H1 (cell line): ENCODE measurements at regions of chr15 and their contacts with region 1.

Region 1: DNA sequence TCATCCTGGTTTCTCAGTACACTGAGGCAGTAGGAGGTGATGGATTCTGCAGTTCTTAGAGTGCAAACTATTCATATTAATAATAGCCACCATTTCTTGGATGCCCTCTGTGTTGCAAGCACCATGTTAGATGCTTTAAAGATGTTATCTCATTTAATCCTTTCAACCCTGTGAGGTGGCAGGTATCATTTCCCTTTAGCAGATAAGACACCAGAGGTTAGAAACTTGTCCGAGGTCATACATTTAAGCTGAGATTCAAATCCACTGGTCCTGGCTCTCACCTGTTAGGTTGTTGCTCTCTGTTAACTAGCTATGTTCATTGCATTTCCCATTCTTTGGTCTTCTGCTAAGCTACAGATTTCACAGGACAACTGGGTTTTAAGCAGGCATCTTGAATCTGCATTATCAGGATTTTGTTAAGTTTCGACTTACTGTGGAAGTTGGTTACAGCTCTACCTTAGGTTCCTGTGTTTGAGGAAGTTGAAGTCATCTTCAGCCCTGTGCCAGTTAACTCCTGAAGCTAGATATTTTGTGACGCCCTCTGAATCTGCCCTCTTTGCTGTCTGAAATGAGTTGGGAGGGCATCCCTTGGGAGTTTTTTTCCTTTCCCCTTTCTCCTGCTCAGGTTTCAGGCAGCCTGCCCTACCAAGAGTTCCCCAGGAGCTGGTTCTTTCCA is 6.4 kb downstream of the PDE8A start:
- DNase-seq: peak in 1 of 2 experiments; percentile 38
- H3K4me3 ChIP-seq: no peak overlapping the region
- H3K27ac ChIP-seq: no peak overlapping the region
- H3K4me1 ChIP-seq: no peaks in the 10 kb centered on the region
- H3K27me3 ChIP-seq: peaks cover 2 to 9% (median 6%) of the 10 kb centered on the region in 4 experiments
- CTCF ChIP-seq: no peak
- EP300 ChIP-seq: no peak
- POLR2A ChIP-seq: no peak
- RAD21 ChIP-seq: no peak

Region 2: GRCh38 chr15:84634228-84634837 is 353.8 kb before region 1 on chr15:
- CTCF ChIA-PET with region 1: no interaction called
- POLR2A ChIA-PET with region 1: no interaction called
- DNase-seq: no peak
- H3K4me3 ChIP-seq: peak overlapping the region; percentile 43 to 71 (median 59)
- H3K27ac ChIP-seq: no peak overlapping the region
- H3K4me1 ChIP-seq: peaks cover 0 to 6% (median 4%) of the 10 kb centered on the region in 4 experiments; a peak in 6 of 7 replicates
- H3K27me3 ChIP-seq: peaks cover 0 to 21% (median 2%) of the 10 kb centered on the region in 4 experiments; a peak in 5 of 7 replicates
- CTCF ChIP-seq: no peak
- EP300 ChIP-seq: no peak
- POLR2A ChIP-seq: no peak
- RAD21 ChIP-seq: no peak

Region 3: GRCh38 chr15:84871428-84872305 is 116.4 kb before region 1 on chr15:
- CTCF ChIA-PET with region 1: no interaction called
- POLR2A ChIA-PET with region 1: no interaction called
- DNase-seq: no peak
- H3K4me3 ChIP-seq: no peak overlapping the region
- H3K27ac ChIP-seq: no peak overlapping the region
- H3K4me1 ChIP-seq: no peaks in the 10 kb centered on the region
- H3K27me3 ChIP-seq: no peaks in the 10 kb centered on the region
- CTCF ChIP-seq: peak; percentile 30 to 40 (median 40)
- EP300 ChIP-seq: no peak
- POLR2A ChIP-seq: no peak
- RAD21 ChIP-seq: peak; percentile 34 to 48

Region 4: GRCh38 chr15:84904419-84904818 is 83.7 kb before region 1 on chr15:
- CTCF ChIA-PET with region 1: no interaction called
- POLR2A ChIA-PET with region 1: no interaction called
- DNase-seq: no peak
- H3K4me3 ChIP-seq: no peak overlapping the region
- H3K27ac ChIP-seq: no peak overlapping the region
- H3K4me1 ChIP-seq: no peaks in the 10 kb centered on the region; a peak in 2 of 7 replicates
- H3K27me3 ChIP-seq: no peaks in the 10 kb centered on the region
- CTCF ChIP-seq: no peak
- EP300 ChIP-seq: no peak
- POLR2A ChIP-seq: no peak
- RAD21 ChIP-seq: no peak

Region 5: GRCh38 chr15:85003593-85004312 is 15.7 kb after region 1 on chr15:
- CTCF ChIA-PET with region 1: interaction called, 12 read pairs
- POLR2A ChIA-PET with region 1: interaction called, 3 read pairs
- DNase-seq: no peak
- H3K4me3 ChIP-seq: no peak overlapping the region
- H3K27ac ChIP-seq: no peak overlapping the region
- H3K4me1 ChIP-seq: peaks cover 0 to 7% (median 5%) of the 10 kb centered on the region in 4 experiments; a peak in 3 of 7 replicates
- H3K27me3 ChIP-seq: no peaks in the 10 kb centered on the region
- CTCF ChIP-seq: no peak
- EP300 ChIP-seq: no peak
- POLR2A ChIP-seq: no peak
- RAD21 ChIP-seq: no peak

Region 6: DNA sequence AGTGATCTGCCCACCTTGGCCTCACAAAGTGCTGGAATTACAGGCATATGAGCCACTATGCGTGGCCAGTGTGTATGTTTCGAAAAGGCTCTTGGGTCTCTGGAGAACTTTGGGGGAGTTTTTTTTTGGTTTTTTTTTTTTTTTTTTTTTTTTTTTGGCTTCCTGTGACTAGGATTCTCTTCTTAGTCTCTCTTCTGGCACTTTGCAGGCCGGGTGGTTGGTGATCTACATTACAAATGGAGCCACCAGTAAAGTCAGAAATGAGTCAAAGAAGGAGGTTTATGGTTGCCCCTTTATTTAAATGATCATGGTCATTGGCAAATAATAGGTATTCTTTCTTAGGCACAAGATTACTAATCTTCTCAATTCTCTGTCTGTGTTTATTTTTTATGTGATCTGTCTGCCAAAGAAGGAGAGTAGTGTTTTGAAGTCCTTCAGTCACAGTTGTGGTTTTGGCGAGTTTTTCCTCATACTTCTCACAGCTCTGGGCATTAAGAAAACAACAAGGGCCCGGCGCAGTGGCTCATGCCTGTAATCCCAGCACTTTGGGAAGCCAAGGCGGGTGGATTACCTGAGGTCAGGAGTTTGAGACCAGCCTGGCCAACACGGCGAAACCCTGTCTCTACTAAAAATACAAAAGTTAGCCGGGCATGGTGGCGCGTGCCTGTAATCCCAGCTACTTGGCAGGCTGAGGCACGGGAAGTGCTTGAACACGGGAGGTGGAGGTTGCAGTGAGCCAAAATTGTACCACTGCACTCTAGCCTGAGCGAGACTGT is 31.9 kb after region 1 on chr15:
- CTCF ChIA-PET with region 1: no interaction called
- POLR2A ChIA-PET with region 1: no interaction called
- DNase-seq: no peak
- H3K4me3 ChIP-seq: no peak overlapping the region
- H3K27ac ChIP-seq: no peak overlapping the region
- H3K4me1 ChIP-seq: peaks cover 0 to 4% (median 0%) of the 10 kb centered on the region in 4 experiments; a peak in 2 of 7 replicates
- H3K27me3 ChIP-seq: no peaks in the 10 kb centered on the region
- CTCF ChIP-seq: no peak
- EP300 ChIP-seq: no peak
- POLR2A ChIP-seq: no peak
- RAD21 ChIP-seq: no peak

Region 7: DNA sequence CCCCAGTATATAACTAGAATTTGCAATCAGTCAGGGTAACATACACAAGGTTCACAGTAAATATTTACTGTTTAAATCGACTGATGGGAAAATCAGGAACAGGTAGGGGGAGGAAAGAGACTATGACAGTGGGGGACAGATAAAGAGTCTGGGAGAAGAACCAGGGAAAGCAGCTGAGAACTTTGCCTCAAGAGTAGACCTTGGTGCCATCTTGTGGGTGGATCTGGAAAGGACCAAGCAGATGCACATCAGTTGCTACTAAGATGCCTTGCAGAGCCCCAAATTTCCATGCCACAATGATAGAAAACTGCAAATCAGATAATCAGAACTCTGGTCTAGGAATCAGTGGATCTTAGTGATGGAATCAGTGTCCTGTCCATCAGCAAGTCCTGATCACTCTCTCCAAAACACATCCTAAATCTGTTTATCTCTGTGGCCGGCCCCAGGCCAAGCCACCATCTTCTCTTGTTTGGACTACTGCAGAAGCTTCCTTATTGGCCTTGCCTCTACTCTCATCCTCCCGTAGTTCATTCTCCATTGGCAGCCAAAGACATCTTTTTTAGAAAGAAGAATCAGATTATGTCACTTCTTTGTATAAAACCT is 56.3 kb after region 1 on chr15:
- CTCF ChIA-PET with region 1: interaction called, 10 read pairs
- POLR2A ChIA-PET with region 1: no interaction called
- DNase-seq: no peak
- H3K4me3 ChIP-seq: no peak overlapping the region
- H3K27ac ChIP-seq: no peak overlapping the region
- H3K4me1 ChIP-seq: no peaks in the 10 kb centered on the region
- H3K27me3 ChIP-seq: no peaks in the 10 kb centered on the region
- CTCF ChIP-seq: peak; percentile 25 to 69 (median 68)
- EP300 ChIP-seq: no peak
- POLR2A ChIP-seq: no peak
- RAD21 ChIP-seq: peak; percentile 83 to 85